GM10248 (cell line): ENCODE measurements at regions of chr3 and their contacts with region 1.

Region 1: DNA sequence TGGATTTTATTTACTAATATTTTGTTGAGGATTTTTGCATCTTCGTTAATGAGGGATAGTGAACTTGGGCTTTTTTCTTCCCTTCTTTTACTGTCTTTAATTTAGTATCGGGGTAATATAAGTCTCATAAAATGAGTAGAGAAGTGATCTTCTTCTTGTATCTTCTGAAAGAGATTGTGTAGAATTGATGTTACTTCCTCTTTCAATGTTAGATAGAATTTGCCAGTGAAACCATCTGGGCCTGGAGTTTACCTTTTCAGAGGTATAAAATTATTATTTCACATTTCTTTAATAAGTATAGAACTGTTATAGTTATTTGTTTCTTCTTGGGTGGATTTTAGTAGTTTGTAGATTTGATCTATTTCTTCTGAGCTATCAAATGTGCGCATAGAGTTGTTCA is 7.8 kb downstream of the HESX1 start:
- DNase-seq: no peak
- CTCF ChIP-seq: no peak

Region 2: DNA sequence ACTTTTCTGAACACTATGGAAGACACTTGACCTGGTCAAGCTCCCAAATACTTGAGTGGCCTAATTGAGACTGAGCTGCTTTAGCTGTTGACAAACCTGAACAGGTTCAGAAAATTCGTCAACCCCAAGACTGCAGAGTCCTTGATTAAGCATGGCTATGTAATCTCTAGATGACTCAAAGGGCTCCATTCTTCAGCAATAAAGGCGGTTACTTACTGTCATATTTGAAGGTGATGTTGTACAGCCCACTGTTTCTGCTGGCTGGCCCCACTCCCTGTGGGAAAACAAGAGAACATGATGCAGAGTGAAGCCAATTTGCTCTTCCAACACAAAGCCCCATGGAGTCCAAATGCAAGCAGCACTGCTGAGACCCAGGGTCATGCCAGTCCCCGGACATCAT is 72.0 kb before region 1 on chr3:
- CTCF ChIA-PET with region 1: no interaction called
- POLR2A ChIA-PET with region 1: no interaction called
- DNase-seq: no peak
- CTCF ChIP-seq: no peak

Region 3: GRCh38 chr3:57179580-57180410 is 12.2 kb before region 1 on chr3:
- CTCF ChIA-PET with region 1: interaction called, 13 read pairs
- POLR2A ChIA-PET with region 1: no interaction called
- DNase-seq: peak; percentile 30
- CTCF ChIP-seq: peak; percentile 66